GM12878 (cell line): ENCODE measurements at regions of chr15 and their contacts with region 1.

Region 1: DNA sequence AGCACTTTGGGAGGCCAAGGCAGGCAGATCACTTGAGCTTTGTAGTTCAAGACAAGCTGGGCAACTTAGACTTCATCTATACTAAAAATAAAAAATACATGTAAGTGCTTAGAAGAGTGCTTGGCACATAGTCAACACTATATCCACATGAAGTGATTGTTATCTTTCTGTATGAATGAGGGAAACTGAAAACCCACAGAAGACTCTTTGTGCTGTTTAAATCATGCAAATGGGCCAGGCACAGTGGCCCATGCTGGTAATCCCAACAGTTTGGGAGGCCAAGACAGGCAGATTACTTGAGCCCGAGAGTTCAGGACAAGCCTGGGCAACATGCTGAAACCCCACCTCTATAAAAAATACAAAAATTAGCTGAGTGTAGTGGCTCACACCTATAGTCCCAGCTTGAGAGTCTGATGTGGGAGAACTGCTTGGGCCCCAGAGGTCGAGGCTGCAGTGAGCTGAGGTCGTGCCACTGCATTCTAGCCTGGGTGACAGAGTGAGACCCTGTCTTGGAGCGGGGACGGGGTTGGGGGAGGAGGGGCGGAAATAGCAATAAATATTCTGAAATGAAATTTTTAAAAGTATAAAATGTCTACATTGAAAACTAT is 129.7 kb downstream of the NR2E3 start:
- DNase-seq: peak; percentile 60
- ATAC-seq: peak; percentile 74
- H3K4me3 ChIP-seq: no peak overlapping the region
- H3K27ac ChIP-seq: no peak overlapping the region
- H3K4me1 ChIP-seq: no peaks in the 10 kb centered on the region
- H3K27me3 ChIP-seq: no peaks in the 10 kb centered on the region
- CTCF ChIP-seq: no peak
- EP300 ChIP-seq: no peak
- POLR2A ChIP-seq: no peak
- RAD21 ChIP-seq: no peak

Region 2: DNA sequence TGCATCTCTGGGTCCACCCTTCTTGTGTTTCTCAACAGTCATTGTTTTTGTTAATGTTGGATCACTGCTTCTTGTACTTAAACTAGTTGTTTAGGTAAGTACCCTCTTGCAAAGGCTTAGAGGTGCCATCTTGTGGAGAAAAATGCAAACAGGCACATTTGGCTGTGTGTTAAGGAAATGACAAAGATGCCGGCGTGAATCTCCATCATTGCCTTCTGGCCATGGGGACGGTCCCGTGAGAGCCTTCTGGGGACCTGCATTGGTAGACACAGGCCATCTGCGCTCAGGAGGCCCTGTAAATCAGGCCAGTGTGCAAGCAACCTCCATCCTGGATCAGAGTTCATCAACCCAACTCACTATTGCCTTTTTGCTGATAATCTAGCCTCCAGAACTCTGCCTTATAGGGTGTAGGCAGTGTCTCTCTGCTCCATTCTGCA is 288.3 kb before region 1 on chr15:
- CTCF ChIA-PET with region 1: no interaction called
- POLR2A ChIA-PET with region 1: no interaction called
- RAD21 ChIA-PET with region 1: no interaction called
- SMC1A ChIA-PET with region 1: no interaction called
- in situ Hi-C with region 1: no loop called
- intact Hi-C with region 1: no loop called
- DNase-seq: peak; percentile 12
- ATAC-seq: peak; percentile 55; the same call in 2 of the 3 replicates
- H3K4me3 ChIP-seq: no peak overlapping the region
- H3K27ac ChIP-seq: no peak overlapping the region
- H3K4me1 ChIP-seq: no peaks in the 10 kb centered on the region
- H3K27me3 ChIP-seq: no peaks in the 10 kb centered on the region; a peak in 1 of 4 replicates
- CTCF ChIP-seq: peak; percentile 37 to 60 (median 39); a peak in 5 of 6 replicates
- EP300 ChIP-seq: no peak
- POLR2A ChIP-seq: no peak
- RAD21 ChIP-seq: peak; percentile 68

Region 3: GRCh38 chr15:71893691-71894090 is 46.4 kb before region 1 on chr15:
- CTCF ChIA-PET with region 1: no interaction called
- POLR2A ChIA-PET with region 1: no interaction called
- RAD21 ChIA-PET with region 1: no interaction called
- SMC1A ChIA-PET with region 1: no interaction called
- in situ Hi-C with region 1: no loop called
- intact Hi-C with region 1: no loop called
- DNase-seq: no peak
- ATAC-seq: no peak
- H3K4me3 ChIP-seq: no peak overlapping the region
- H3K27ac ChIP-seq: no peak overlapping the region
- H3K4me1 ChIP-seq: peaks cover 12% of the 10 kb centered on the region
- H3K27me3 ChIP-seq: no peaks in the 10 kb centered on the region
- CTCF ChIP-seq: no peak
- EP300 ChIP-seq: no peak
- POLR2A ChIP-seq: no peak
- RAD21 ChIP-seq: no peak

Region 4: GRCh38 chr15:71914092-71914491 is 26.0 kb before region 1 on chr15:
- CTCF ChIA-PET with region 1: no interaction called
- POLR2A ChIA-PET with region 1: no interaction called
- RAD21 ChIA-PET with region 1: no interaction called
- SMC1A ChIA-PET with region 1: no interaction called
- in situ Hi-C with region 1: no loop called
- intact Hi-C with region 1: loop called (anchors 1 kb)
- DNase-seq: peak; percentile 66
- ATAC-seq: peak; percentile 95
- H3K4me3 ChIP-seq: no peak overlapping the region
- H3K27ac ChIP-seq: peak overlapping the region; percentile 38; the same call in 1 of the 2 replicates
- H3K4me1 ChIP-seq: 0 out of 2 replicates have a peak, but pooled peaks cover 4% of the 10 kb centered on the region
- H3K27me3 ChIP-seq: no peaks in the 10 kb centered on the region
- CTCF ChIP-seq: no peak
- EP300 ChIP-seq: peak; percentile 18 to 64; a peak in 1 of 4 replicates
- POLR2A ChIP-seq: no peak
- RAD21 ChIP-seq: no peak